Posterior cingulate gyrus (tissue), 11 donors: ENCODE measurements at regions of chr17 and their contacts with region 1.

Region 1: DNA sequence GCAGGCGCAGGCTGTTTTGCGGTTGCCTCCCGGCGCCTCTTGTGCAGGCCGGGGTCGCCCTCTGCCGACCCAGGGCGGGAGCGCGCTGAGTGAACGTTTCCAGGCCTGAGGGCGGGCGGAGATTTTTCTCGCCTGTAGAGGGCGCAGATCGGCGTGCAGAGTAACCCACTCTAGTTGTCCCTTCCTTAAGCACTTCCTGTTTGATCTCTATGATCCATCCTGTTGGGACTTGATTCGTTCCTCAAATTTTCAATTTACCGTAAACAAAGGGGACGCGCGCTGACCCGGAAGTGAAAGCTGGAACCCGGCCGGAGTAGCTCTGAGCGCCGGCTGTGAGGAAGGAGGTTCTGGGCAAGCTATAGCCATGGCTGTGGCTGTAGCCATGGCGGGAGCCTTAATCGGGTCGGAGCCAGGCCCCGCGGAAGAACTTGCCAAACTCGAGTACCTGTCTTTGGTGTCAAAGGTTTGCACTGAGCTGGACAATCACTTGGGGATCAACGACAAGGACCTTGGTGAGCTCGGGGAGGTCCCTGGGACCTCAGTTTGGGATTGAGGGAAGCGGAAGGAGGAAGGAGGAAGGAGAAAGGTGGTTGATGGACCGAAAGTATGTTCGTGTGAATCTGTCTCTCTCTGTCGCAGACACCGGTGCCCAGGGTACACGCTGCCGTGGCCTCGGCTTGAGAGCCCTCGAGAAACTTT is at the start of gene DHX8:
- DNase-seq: peak; percentile 91 to 99 (median 96)

Region 2: GRCh38 chr17:43393944-43394482 is 89.8 kb before region 1 on chr17:
- intact Hi-C with region 1: loop called (anchors 1 kb)
- DNase-seq: peak; percentile 74 to 97 (median 94)

Region 3: GRCh38 chr17:44014437-44015172 is 530.8 kb after region 1 on chr17 and contains the start of gene TMEM101:
- intact Hi-C with region 1: loop called (anchors 10 kb)
- DNase-seq: peak; percentile 85 to 98 (median 91)